ENCODE measurements at regions of chr1 and their contacts with region 1.

Region 1: DNA sequence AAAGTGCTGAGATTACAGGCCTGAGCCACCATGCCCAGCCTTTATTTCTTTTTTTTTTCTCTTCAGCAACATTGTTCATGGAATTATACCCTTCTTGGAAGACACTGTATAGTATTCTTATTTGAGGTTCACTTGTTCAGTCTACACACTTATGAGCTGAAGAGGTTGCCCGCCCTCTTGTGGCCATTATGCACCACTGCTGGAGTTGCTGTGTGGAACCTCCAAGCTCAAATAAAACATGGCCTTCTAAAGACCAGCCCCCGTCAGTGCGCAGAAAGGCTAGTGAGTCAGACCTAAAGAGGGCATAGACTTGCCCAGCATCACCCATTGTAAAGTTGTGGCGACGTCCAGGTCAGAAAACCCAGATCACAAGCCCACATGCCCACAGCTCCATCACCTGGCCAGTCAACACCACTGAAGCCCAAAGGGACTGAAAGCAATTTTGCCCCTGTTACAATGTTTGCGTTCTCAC is 20.4 kb downstream of the LURAP1 start:
- DNase-seq: peak in 5 of 6 donors; percentile 41 to 75 (median 54)
- ATAC-seq: peak; percentile 91 to 99 (median 98)
- H3K4me3 ChIP-seq: no peak overlapping the region
- H3K27ac ChIP-seq: no peak overlapping the region
- H3K4me1 ChIP-seq: no peaks in the 10 kb centered on the region
- H3K27me3 ChIP-seq: no peaks in the 10 kb centered on the region
- CTCF ChIP-seq: peak; percentile 74 to 91 (median 83)

Region 2: GRCh38 chr1:46030876-46031660 is 192.4 kb before region 1 on chr1:
- intact Hi-C with region 1: loop called in 1 of 3 experiments (anchors 5 kb)
- DNase-seq: peak in 5 of 6 donors; percentile 28 to 72 (median 50)
- ATAC-seq: peak; percentile 55 to 81 (median 62)
- H3K4me3 ChIP-seq: no peak overlapping the region
- H3K27ac ChIP-seq: no peak overlapping the region
- H3K4me1 ChIP-seq: peaks cover 0 to 3% (median 0%) of the 10 kb centered on the region in 3 donors
- H3K27me3 ChIP-seq: no peaks in the 10 kb centered on the region
- CTCF ChIP-seq: no peak

Region 3: DNA sequence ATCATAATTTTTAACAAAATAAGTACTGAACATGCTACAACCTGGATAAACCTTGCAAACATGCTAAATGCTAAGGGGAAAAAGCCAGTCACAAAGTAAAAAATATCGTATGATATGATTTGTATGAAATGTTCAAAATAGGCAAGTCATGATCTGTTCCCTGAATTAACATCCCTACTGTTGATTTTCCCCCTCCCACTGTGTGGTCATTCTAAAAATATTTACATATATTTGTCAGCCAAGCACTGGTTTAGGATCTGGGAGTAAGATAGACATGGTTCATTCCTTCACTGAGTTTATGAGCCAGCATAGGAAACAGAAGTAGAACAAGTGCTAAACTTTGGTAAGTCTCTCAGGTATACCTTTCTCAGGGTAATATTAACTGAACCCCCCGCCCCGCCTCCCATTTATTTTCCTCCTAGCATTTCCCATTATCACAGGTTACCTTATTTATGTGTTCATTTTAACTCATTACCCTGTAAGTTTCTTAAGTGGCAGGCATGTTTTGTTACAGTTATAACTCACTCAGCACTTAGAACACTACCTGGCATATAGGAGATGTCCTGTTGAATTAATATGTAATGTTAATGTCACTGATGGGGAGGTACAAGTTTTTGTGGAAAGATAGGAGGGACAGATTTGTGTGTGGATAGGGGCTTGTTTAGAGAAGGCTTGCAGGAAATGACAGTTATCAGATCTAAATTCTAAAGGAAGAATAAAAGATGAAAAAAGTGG is 92.3 kb after region 1 on chr1:
- intact Hi-C with region 1: no loop called
- DNase-seq: no peak
- ATAC-seq: no peak
- H3K4me3 ChIP-seq: no peak overlapping the region
- H3K27ac ChIP-seq: no peak overlapping the region
- H3K4me1 ChIP-seq: no peaks in the 10 kb centered on the region
- H3K27me3 ChIP-seq: no peaks in the 10 kb centered on the region
- CTCF ChIP-seq: no peak